Activated naive CD4-positive, alpha-beta T cell treated with anti-CD3 and anti-CD28 coated beads for 36 hours (primary cell): ENCODE measurements at regions of chr7 and their contacts with region 1.

Region 1: DNA sequence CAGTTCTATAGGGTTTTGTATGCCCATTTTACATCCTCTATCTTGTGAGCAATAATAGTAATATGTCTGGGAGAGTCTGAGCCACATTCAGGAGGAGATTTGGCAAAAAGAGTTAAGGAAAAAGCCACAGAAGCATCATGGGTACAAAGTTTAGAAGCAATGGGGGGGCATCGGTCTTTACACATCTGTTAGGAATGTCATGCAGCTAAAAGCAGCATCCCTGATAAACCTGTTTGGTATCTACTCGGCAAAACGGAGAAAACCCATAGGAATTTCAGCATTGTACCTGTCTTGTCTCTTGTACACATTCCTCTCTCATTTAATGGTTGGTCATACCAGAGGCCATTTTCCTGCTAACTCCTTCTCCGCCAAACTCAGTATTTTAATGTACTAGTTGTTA is 12.5 kb upstream of the HERPUD2 start:
- DNase-seq: no peak
- H3K4me3 Mint-ChIP-seq: no peak overlapping the region
- H3K27ac Mint-ChIP-seq: no peak overlapping the region
- H3K4me1 Mint-ChIP-seq: peaks cover 7% of the 10 kb centered on the region
- H3K27me3 Mint-ChIP-seq: no peaks in the 10 kb centered on the region

Region 2: GRCh38 chr7:35723011-35723410 is 15.6 kb after region 1 on chr7:
- CTCF ChIA-PET with region 1: interaction called, 28 read pairs
- intact Hi-C with region 1: loop called (anchors 1 kb)
- DNase-seq: peak; percentile 22
- H3K4me3 Mint-ChIP-seq: no peak overlapping the region
- H3K27ac Mint-ChIP-seq: peak overlapping the region; percentile 59
- H3K4me1 Mint-ChIP-seq: peaks cover 43% of the 10 kb centered on the region
- H3K27me3 Mint-ChIP-seq: no peaks in the 10 kb centered on the region

Region 3: DNA sequence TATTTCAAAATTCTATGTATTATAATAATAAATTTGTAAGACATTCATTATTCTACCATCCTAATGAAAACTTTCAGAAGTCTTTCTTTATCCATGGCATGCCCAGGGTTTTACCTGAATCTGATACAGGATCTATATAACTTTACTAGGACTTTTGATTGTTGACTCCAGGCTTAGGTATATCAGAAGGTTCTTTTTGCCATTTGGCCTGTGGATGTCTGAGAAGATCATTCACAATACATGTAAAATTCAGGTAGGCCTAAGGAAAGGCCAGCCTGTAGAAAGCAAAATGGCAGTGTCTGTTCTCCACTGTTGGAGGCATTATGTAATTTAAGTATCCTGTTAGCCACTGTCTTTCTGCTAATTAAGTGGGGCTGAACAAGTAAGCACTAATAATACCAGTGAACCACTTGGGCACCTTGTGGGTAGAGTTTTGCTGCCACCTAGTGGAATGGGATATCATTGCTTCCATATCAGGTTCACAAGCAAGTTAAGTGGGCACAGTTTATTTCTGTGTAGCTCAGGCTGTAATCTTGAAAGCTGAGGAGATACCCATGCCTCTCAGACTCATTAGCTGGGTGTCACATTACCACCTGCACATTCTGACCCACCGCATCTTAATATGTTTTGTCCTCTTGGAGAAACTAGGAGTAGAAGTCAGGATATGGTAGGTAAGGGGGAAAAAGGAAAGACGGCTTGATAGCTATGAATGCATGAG is 198.9 kb after region 1 on chr7:
- CTCF ChIA-PET with region 1: interaction called, 51 read pairs
- intact Hi-C with region 1: loop called (anchors 1 kb)
- DNase-seq: peak; percentile 82
- H3K4me3 Mint-ChIP-seq: no peak overlapping the region
- H3K27ac Mint-ChIP-seq: no peak overlapping the region
- H3K4me1 Mint-ChIP-seq: peaks cover 4% of the 10 kb centered on the region
- H3K27me3 Mint-ChIP-seq: no peaks in the 10 kb centered on the region

Region 4: DNA sequence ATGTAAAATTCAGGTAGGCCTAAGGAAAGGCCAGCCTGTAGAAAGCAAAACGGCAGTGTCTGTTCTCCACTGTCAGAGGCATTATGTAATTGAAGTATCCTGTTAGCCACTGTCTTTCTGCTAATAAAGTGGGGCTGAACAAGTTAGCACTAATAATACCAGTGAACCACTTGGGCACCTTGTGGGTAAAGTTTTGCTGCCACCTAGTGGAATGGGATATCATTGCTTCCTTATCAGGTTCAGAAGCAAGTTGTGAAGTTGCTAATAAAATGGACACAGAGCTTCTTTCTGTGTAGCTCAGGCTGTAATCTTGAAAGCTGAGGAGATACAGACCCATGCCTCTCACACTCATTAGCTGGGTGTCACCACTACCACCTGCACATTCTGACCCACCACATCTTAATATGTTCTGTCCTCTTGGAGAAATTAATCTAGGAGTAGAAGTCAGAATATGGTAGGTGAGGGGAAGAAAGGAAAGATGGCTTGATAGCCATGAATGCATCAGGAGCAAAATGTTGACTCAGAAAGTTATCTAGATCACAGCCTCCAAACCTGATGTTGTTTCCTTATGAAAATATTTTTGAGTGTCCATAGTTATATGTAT is 268.5 kb after region 1 on chr7:
- CTCF ChIA-PET with region 1: interaction called, 3 read pairs
- intact Hi-C with region 1: loop called (anchors 1 kb)
- DNase-seq: peak; percentile 67
- H3K4me3 Mint-ChIP-seq: no peak overlapping the region
- H3K27ac Mint-ChIP-seq: no peak overlapping the region
- H3K4me1 Mint-ChIP-seq: peaks cover 4% of the 10 kb centered on the region
- H3K27me3 Mint-ChIP-seq: peaks cover 11% of the 10 kb centered on the region